PC-3 (cell line): ENCODE measurements at regions of chr10 and their contacts with region 1.

Region 1: DNA sequence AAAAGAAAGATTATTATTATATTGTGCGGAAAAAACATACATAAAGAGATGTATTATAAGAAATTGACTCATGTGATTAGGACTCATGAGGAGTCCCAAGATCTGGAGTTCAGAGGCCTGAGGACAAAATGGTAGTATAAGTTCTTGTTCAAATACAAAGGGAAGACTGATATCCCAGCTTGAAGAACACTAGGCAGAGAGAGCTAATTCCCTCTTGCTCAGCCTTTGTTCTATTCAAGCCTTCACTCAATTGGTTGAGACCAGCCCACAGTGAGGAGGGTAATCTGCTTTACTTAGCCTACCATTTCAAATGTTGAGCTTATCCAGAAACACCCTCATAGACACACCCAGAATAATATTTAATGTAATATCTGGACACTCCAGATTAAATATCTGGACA is 1683.8 kb downstream of the REEP3 start:
- DNase-seq: no peak
- ATAC-seq: no peak
- H3K4me3 ChIP-seq: no peak overlapping the region
- H3K27ac ChIP-seq: no peak overlapping the region
- H3K4me1 ChIP-seq: no peaks in the 10 kb centered on the region
- H3K27me3 ChIP-seq: no peaks in the 10 kb centered on the region
- CTCF ChIP-seq: no peak

Region 2: DNA sequence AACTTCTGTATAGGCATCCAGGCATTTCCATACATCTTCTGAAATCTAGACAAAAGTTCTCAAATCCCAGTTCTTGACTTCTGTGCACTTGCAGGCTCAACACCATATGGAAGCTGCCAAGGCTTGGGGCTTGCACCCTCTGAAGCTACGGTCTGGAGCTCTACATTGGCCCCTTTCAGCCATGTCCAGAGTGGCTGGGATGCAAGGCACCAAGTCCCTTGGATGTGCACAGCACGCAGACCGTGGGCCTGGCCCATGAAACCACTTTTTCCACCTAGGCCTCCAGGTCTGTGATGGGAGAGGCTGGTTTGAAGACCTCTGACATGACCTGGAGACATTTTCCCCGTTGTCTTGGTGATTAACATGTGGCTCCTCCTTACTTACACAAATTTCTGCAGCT is 38.7 kb before region 1 on chr10:
- CTCF ChIA-PET with region 1: no interaction called
- POLR2A ChIA-PET with region 1: no interaction called
- intact Hi-C with region 1: loop called (anchors 2 kb)
- DNase-seq: no peak
- ATAC-seq: no peak
- H3K4me3 ChIP-seq: no peak overlapping the region
- H3K27ac ChIP-seq: no peak overlapping the region
- H3K4me1 ChIP-seq: no peaks in the 10 kb centered on the region
- H3K27me3 ChIP-seq: no peaks in the 10 kb centered on the region
- CTCF ChIP-seq: no peak

Region 3: DNA sequence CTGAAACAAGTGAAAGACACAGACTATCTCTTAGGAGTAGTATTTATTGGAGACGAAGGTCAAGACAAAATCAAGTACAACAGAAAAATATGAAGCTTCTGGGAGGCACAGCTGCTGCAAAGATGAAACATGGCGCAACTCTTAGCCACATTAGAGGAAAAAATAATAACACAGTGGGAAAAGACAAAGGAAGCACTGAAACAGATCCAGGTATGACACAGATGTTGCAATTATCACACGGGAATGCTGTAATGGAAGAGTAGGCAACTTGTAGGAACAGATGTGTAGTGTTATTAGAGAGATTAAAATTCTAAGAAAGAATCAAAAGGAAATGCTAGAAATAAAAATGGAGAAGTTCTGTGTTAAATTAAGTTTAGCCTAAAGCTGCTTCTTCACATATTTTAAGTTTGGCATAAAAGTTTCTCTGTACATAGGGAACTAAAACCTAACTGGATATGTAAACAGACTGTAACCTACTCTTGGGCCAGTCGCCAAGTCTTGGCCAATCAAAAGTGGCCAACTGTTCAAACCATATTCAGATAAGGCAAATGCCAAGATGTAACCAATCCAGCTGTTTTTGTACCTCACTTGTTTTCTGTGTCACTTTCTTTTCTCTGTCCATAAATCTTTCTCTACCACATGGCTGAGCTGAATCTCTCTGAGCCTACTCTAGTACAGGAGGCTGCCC is 588.9 kb after region 1 on chr10:
- CTCF ChIA-PET with region 1: no interaction called
- POLR2A ChIA-PET with region 1: no interaction called
- intact Hi-C with region 1: loop called (anchors 5 kb)
- DNase-seq: peak; percentile 40
- ATAC-seq: peak; percentile 18; the same call in 1 of the 2 replicates
- H3K4me3 ChIP-seq: no peak overlapping the region
- H3K27ac ChIP-seq: no peak overlapping the region
- H3K4me1 ChIP-seq: no peaks in the 10 kb centered on the region
- H3K27me3 ChIP-seq: no peaks in the 10 kb centered on the region
- CTCF ChIP-seq: no peak